ENCODE measurements at regions of chr13 and their contacts with region 1.

Region 1: DNA sequence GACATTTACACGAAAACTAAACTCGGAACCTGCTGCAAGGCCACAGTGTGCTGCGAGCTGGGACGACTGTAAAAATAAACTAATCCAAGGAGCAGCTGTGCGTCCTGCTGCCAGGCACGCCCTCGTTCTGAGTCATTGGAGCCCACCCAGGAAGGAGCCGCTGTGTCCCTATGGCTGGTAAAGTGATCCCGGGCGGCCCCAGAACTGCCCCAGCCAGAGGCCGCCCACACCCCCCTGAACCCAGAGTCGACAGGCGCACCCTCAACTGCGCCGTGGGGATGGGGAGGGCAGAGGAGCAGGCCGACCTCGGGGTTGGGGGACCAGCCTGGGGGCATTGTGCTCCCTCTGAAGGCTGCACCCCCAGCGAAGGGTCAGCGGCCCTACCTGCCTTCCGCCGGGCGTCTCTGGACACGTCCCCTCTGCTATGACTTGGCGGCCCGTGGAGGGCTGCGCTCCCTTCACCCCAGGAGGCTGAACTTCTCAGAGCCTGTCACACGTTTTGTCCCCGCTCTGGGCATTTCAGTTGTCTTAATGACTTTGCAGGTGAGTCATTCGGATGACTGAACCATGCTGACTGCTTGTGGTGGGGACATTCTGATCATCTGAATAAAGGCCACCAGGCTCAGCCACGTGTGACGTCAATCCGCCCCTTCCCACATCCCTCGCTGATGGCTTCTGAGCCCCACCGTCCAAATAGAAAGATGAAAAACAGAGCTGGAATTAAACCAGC is 42.7 kb downstream of the ADPRHL1 start:
- DNase-seq: no peak
- H3K4me3 ChIP-seq: peak overlapping the region; percentile 20
- H3K27me3 ChIP-seq: no peaks in the 10 kb centered on the region
- CTCF ChIP-seq: no peak

Region 2: DNA sequence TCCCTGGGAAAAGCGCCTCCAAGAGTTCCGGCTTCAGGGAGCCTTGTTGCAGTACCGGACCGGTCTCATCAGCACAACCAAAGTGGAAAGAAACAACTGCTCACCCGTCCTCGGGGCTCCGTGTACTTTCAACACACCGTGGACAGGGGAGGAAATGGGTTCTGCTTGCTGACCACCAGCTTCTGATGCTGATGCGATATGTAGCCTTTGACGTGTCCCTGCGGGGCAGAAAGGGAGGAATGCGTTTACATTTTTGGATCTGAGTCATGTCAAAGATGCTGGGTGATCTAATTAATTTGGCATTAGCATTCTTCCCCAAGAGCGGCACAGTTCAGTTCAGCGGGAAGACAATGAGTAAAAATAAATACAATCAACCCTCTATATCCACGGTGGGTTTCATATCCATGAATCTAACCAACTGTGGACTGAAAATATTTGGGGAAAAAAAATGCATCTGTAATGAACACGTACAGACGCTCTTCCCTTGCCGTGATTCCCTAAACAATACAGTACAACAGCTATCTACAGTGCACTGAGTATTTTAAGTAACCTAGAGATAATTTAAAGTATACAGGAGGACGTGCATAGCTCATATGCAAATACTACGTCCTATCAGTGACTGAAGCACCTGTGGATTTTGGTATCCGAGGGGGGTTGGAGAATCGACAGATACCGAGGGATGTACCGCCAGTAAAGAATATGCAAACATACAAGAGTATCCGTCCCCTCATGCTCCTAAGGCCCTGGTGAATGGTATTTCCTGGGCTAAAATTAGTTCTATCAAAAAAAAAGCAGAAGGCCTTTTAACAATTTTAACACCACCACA is 232.4 kb before region 1 on chr13:
- CTCF ChIA-PET with region 1: no interaction called
- POLR2A ChIA-PET with region 1: interaction called, 15 read pairs
- DNase-seq: peak; percentile 82
- H3K4me3 ChIP-seq: peak overlapping the region; percentile 20
- H3K27me3 ChIP-seq: no peaks in the 10 kb centered on the region
- CTCF ChIP-seq: no peak

Region 3: DNA sequence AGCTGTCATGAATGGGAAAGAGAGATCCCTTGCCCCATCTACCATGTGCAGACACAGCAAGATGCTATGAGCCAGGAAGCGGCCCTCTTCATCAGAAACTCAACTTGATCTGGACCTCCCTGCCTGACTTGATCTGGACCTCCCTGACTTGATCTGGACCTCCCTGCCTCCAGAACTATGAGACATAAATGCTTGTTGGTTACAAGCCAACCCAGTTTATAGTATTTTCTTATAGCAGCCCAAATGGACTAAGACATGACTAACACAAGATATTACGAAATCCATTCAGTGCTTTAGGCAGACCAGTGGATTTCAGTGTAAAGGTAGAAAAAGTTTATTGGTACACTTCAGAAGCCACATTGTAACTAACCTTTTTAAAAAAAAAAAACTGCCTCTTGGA is 217.7 kb before region 1 on chr13:
- CTCF ChIA-PET with region 1: no interaction called
- POLR2A ChIA-PET with region 1: no interaction called
- DNase-seq: peak; percentile 37
- H3K4me3 ChIP-seq: no peak overlapping the region
- H3K27me3 ChIP-seq: no peaks in the 10 kb centered on the region
- CTCF ChIP-seq: no peak

Region 4: GRCh38 chr13:113393563-113394338 is 16.9 kb before region 1 on chr13:
- CTCF ChIA-PET with region 1: interaction called, 24 read pairs
- POLR2A ChIA-PET with region 1: interaction called, 5 read pairs
- DNase-seq: no peak
- H3K4me3 ChIP-seq: peak overlapping the region; percentile 74
- H3K27me3 ChIP-seq: no peaks in the 10 kb centered on the region
- CTCF ChIP-seq: 0 out of 2 replicates have a peak, but pooled peaks have one; percentile 22

Region 5: GRCh38 chr13:113490496-113491417 is 80.1 kb after region 1 on chr13 and contains the start of gene DCUN1D2:
- CTCF ChIA-PET with region 1: no interaction called
- POLR2A ChIA-PET with region 1: interaction called, 12 read pairs
- DNase-seq: peak; percentile 89
- H3K4me3 ChIP-seq: peak within 1 kb of the TSS; percentile 80
- H3K27me3 ChIP-seq: no peaks in the 10 kb centered on the region
- CTCF ChIP-seq: no peak
- polyA plus RNA-seq, gene DCUN1D2: 11.0 and 12.7 TPM in 2 replicates

Measured in BJ (cell line).